ENCODE measurements at regions of chr3 and their contacts with region 1.

Region 1: DNA sequence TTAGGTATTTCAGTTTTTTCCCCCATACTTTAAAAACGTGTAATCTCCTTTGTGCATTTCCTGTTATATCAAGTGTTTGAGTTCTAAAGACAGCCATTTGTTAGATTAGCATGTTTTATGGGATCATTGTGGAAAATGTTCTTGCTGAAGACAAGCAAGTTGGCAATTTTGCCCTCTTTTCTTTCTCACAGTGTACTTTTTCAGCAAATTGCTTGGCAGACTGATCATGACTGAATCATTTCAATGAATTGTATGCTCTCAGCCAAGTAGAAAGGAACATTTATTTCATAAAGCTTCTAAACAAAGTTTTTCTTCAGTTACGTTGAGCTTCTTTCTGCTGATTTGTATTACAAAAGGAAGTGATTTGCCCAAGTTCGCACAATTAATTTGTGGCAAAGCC is 51.6 kb downstream of the ATG7 start:
- DNase-seq: no peak
- H3K4me3 ChIP-seq: no peak overlapping the region
- CTCF ChIP-seq: no peak

Region 2: DNA sequence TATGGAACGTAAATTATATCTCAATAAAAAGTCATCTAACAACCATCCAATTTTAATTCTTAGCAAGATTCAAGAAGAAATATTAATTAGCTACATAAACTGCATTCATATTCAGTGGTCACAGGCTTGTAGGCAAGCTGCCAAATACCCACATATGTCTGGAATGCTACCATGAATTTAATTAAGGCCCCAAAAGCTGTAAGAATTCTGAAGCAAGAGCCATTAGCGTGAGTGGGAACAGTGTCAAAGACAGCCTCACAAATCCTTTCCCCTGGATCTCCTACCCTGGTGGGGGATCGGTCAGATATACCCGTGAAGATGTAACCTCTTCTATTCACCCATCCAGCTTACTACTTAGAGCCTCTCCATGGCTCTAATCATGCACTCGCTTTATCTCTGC is 11.6 kb before region 1 on chr3:
- CTCF ChIA-PET with region 1: interaction called, 10 read pairs
- POLR2A ChIA-PET with region 1: no interaction called
- DNase-seq: no peak
- H3K4me3 ChIP-seq: no peak overlapping the region
- CTCF ChIP-seq: no peak

Measured in AG04449 (cell line).